CD8-positive, alpha-beta T cell (primary cell): ENCODE measurements at regions of chr11 and their contacts with region 1.

Region 1: GRCh38 chr11:78449866-78450265 is 32.2 kb upstream of the GAB2 start:
- DNase-seq: no peak
- ATAC-seq: no peak
- H3K4me3 ChIP-seq: no peak overlapping the region
- H3K4me3 Mint-ChIP-seq: no peak overlapping the region
- H3K27ac ChIP-seq: no peak overlapping the region
- H3K27ac Mint-ChIP-seq: no peak overlapping the region
- H3K4me1 ChIP-seq: no peaks in the 10 kb centered on the region
- H3K4me1 Mint-ChIP-seq: peaks cover 13% of the 10 kb centered on the region
- H3K27me3 ChIP-seq: no peaks in the 10 kb centered on the region
- H3K27me3 Mint-ChIP-seq: no peaks in the 10 kb centered on the region
- CTCF ChIP-seq: no peak

Region 2: GRCh38 chr11:78465169-78465942 is 15.5 kb after region 1 on chr11:
- CTCF ChIA-PET with region 1: no interaction called
- POLR2A ChIA-PET with region 1: no interaction called
- intact Hi-C with region 1: no loop called
- DNase-seq: peak; percentile 1 to 74 (median 32)
- ATAC-seq: peak; percentile 98
- H3K4me3 ChIP-seq: peak overlapping the region in 1 of 2 experiments; percentile 37
- H3K4me3 Mint-ChIP-seq: peak overlapping the region; percentile 77
- H3K27ac ChIP-seq: peak overlapping the region; percentile 33 to 86
- H3K27ac Mint-ChIP-seq: peak overlapping the region; percentile 96
- H3K4me1 ChIP-seq: peaks cover 13% of the 10 kb centered on the region
- H3K4me1 Mint-ChIP-seq: peaks cover 24% of the 10 kb centered on the region
- H3K27me3 ChIP-seq: no peaks in the 10 kb centered on the region
- H3K27me3 Mint-ChIP-seq: no peaks in the 10 kb centered on the region
- CTCF ChIP-seq: no peak

Region 3: GRCh38 chr11:78476066-78476465 is 26.2 kb after region 1 on chr11:
- CTCF ChIA-PET with region 1: no interaction called
- POLR2A ChIA-PET with region 1: no interaction called
- intact Hi-C with region 1: loop called in 1 of 2 experiments (anchors 1 kb)
- DNase-seq: no peak
- ATAC-seq: no peak
- H3K4me3 ChIP-seq: no peak overlapping the region
- H3K4me3 Mint-ChIP-seq: no peak overlapping the region
- H3K27ac ChIP-seq: no peak overlapping the region
- H3K27ac Mint-ChIP-seq: no peak overlapping the region
- H3K4me1 ChIP-seq: no peaks in the 10 kb centered on the region
- H3K4me1 Mint-ChIP-seq: no peaks in the 10 kb centered on the region
- H3K27me3 ChIP-seq: no peaks in the 10 kb centered on the region
- H3K27me3 Mint-ChIP-seq: no peaks in the 10 kb centered on the region
- CTCF ChIP-seq: no peak